Right lobe of liver (tissue), 6 donors: ENCODE measurements at regions of chr1 and their contacts with region 1.

Region 1: GRCh38 chr1:167059045-167059808 is 30.9 kb downstream of the GPA33 start:
- DNase-seq: peak; percentile 62 to 70 (median 70)
- ATAC-seq: peak; percentile 67 to 88 (median 86)
- H3K4me3 ChIP-seq: no peak overlapping the region
- H3K27ac ChIP-seq: no peak overlapping the region
- H3K4me1 ChIP-seq: peaks cover 0 to 3% (median 0%) of the 10 kb centered on the region in 4 donors
- H3K27me3 ChIP-seq: no peaks in the 10 kb centered on the region
- CTCF ChIP-seq: peak; percentile 92 to 97 (median 96)
- POLR2A ChIP-seq: no peak

Region 2: GRCh38 chr1:166905900-166906299 is 153.3 kb before region 1 on chr1:
- intact Hi-C with region 1: loop called in 1 of 2 experiments (anchors 5 kb)
- DNase-seq: no peak
- ATAC-seq: no peak
- H3K4me3 ChIP-seq: no peak overlapping the region
- H3K27ac ChIP-seq: no peak overlapping the region
- H3K4me1 ChIP-seq: no peaks in the 10 kb centered on the region
- H3K27me3 ChIP-seq: no peaks in the 10 kb centered on the region
- CTCF ChIP-seq: no peak
- POLR2A ChIP-seq: no peak

Region 3: GRCh38 chr1:166975361-166976129 is 83.7 kb before region 1 on chr1 and contains the start of gene ILDR2:
- intact Hi-C with region 1: loop called (anchors 10 kb)
- DNase-seq: peak; percentile 77 to 84 (median 81)
- ATAC-seq: peak; percentile 86 to 94 (median 94)
- H3K4me3 ChIP-seq: peak within 1 kb of the TSS; percentile 68 to 81 (median 73)
- H3K27ac ChIP-seq: peak within 1 kb of the TSS; percentile 23 to 74 (median 51)
- H3K4me1 ChIP-seq: peaks cover 0 to under 1% (median 0%) of the 10 kb centered on the region in 4 donors
- H3K27me3 ChIP-seq: no peaks in the 10 kb centered on the region
- CTCF ChIP-seq: peak in 3 of 4 donors; percentile 21 to 43 (median 23)
- POLR2A ChIP-seq: no peak
- total RNA-seq, gene ILDR2: 1.4 to 3.7 (median 2.2) TPM